Gastrocnemius medialis (tissue), 4 donors: ENCODE measurements at regions of chr6 and their contacts with region 1.

Region 1: DNA sequence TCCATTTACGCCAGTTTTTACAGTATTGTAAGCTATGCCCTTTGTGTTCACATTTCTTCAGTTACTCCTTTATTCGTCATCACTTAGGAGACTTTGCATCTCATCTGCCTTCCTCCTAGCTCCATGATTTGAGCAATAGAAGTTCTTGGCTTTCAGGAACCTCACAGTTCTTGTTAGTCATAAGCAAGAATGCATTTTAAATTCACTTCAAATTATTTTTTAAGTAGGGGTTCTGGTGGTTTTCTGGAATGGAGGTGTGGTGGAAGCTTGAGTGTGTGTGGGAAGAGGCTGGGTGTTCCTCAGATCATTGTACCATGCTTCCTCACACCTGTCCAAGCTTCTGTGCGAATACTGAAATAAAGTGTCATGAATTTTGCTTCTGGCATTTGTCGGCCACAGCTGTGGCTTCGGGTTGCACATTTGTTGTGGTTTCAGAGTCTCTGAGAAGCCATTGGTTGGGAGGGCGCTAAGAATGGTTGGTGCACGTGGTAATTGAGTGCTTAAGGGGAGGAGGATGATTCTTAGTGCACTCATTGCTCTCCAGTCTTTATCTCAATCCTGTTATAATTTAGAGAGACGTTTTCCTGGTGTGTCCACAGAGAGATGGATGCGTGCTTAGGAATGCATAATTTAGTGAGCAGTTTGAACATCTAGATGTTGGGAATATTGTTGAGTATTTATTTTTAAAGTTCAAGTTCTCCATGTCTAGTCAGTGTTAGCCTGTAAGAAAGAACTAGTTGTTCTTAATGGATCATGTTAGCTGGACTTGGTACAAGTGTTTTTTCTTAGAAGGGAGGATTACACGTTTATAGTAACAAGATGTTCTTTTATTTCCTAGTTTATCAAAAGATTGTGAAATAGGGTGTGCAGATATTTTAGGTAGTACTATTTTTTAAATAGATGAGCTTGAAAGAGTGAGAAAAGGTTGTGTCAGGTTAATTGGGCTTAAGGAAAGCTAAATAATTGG is 31.9 kb downstream of the FOXO3 start:
- DNase-seq: peak; percentile 91 to 93
- ATAC-seq: peak; percentile 71 to 78
- H3K4me3 ChIP-seq: peak overlapping the region in 3 of 4 donors; percentile 29 to 40 (median 39)
- H3K27ac ChIP-seq: peak overlapping the region; percentile 86 to 96 (median 90)
- H3K4me1 ChIP-seq: peaks cover 97 to 100% of the 10 kb centered on the region in 2 donors
- H3K27me3 ChIP-seq: no peaks in the 10 kb centered on the region
- CTCF ChIP-seq: no peak
- POLR2A ChIP-seq: peak in 1 of 2 donors; percentile 65

Region 2: GRCh38 chr6:108661430-108661829 is 68.8 kb after region 1 on chr6:
- in situ Hi-C with region 1: loop called in 1 of 4 experiments (anchors 5 kb)
- intact Hi-C with region 1: no loop called
- DNase-seq: peak; percentile 44 to 49
- ATAC-seq: peak; percentile 88 to 93
- H3K4me3 ChIP-seq: peak overlapping the region in 2 of 4 donors; percentile 63 to 67
- H3K27ac ChIP-seq: peak overlapping the region; percentile 89 to 94 (median 92)
- H3K4me1 ChIP-seq: peaks cover 59 to 67% of the 10 kb centered on the region in 2 donors
- H3K27me3 ChIP-seq: no peaks in the 10 kb centered on the region
- CTCF ChIP-seq: no peak
- POLR2A ChIP-seq: peak; percentile 38 to 70

Region 3: DNA sequence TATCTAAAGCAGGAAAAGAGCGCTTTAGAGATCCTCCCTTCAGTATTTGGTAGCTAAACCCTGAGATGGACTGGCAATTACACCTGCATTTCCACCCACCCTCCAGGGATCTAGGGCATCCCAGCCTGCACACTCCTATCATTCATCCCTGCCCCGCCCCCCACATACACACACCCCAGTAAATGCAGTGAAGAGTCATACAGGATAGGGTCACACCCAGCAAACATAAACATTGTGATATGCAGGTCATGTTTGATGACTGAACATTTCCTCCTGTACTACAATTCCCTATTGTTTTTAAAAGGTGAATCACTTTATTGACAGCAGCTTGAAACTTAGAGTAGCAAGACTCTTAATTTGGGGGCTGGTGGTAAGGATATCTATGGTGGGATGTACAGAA is 80.9 kb after region 1 on chr6:
- in situ Hi-C with region 1: loop called in 1 of 4 experiments (anchors 10 kb)
- intact Hi-C with region 1: no loop called
- DNase-seq: no peak
- ATAC-seq: no peak
- H3K4me3 ChIP-seq: no peak overlapping the region
- H3K27ac ChIP-seq: peak overlapping the region; percentile 11 to 72 (median 68)
- H3K4me1 ChIP-seq: peaks cover 94 to 98% of the 10 kb centered on the region in 2 donors
- H3K27me3 ChIP-seq: no peaks in the 10 kb centered on the region
- CTCF ChIP-seq: no peak
- POLR2A ChIP-seq: no peak